CD8-positive, alpha-beta T cell (primary cell): ENCODE measurements at regions of chr7 and their contacts with region 1.

Region 1: GRCh38 chr7:151351027-151351426 is 9.4 kb downstream of the NUB1 start:
- DNase-seq: peak in 4 of 9 experiments; percentile 29 to 59 (median 46)
- ATAC-seq: no peak
- H3K4me3 ChIP-seq: no peak overlapping the region
- H3K4me3 Mint-ChIP-seq: peak overlapping the region; percentile 22
- H3K27ac ChIP-seq: peak overlapping the region; percentile 45 to 98
- H3K27ac Mint-ChIP-seq: peak overlapping the region; percentile 89
- H3K4me1 ChIP-seq: peaks cover 39% of the 10 kb centered on the region
- H3K4me1 Mint-ChIP-seq: peaks cover 57% of the 10 kb centered on the region
- H3K27me3 ChIP-seq: no peaks in the 10 kb centered on the region
- H3K27me3 Mint-ChIP-seq: no peaks in the 10 kb centered on the region
- CTCF ChIP-seq: no peak

Region 2: GRCh38 chr7:151232091-151232916 is 118.7 kb before region 1 on chr7 and contains the start of gene CHPF2:
- CTCF ChIA-PET with region 1: interaction called, 3 read pairs
- POLR2A ChIA-PET with region 1: no interaction called
- intact Hi-C with region 1: loop called in 1 of 2 experiments (anchors 1 kb)
- DNase-seq: peak; percentile 71 to 94 (median 92)
- ATAC-seq: peak; percentile 74
- H3K4me3 ChIP-seq: peak within 1 kb of the TSS; percentile 76 to 96
- H3K4me3 Mint-ChIP-seq: peak within 1 kb of the TSS; percentile 100
- H3K27ac ChIP-seq: peak within 1 kb of the TSS; percentile 54 to 59
- H3K27ac Mint-ChIP-seq: peak within 1 kb of the TSS; percentile 98
- H3K4me1 ChIP-seq: peaks cover 22% of the 10 kb centered on the region
- H3K4me1 Mint-ChIP-seq: peaks cover 35% of the 10 kb centered on the region
- H3K27me3 ChIP-seq: no peaks in the 10 kb centered on the region
- H3K27me3 Mint-ChIP-seq: no peaks in the 10 kb centered on the region
- CTCF ChIP-seq: no peak
- total RNA-seq, gene CHPF2: 24.7 to 24.9 TPM

Region 3: GRCh38 chr7:151315038-151315655 is 35.9 kb before region 1 on chr7:
- CTCF ChIA-PET with region 1: interaction called, 192 read pairs
- POLR2A ChIA-PET with region 1: interaction called, 10 read pairs
- intact Hi-C with region 1: loop called (anchors 1 kb)
- DNase-seq: peak; percentile 63 to 89 (median 82)
- ATAC-seq: peak; percentile 95
- H3K4me3 ChIP-seq: no peak overlapping the region
- H3K4me3 Mint-ChIP-seq: no peak overlapping the region
- H3K27ac ChIP-seq: no peak overlapping the region
- H3K27ac Mint-ChIP-seq: no peak overlapping the region
- H3K4me1 ChIP-seq: peaks cover 4% of the 10 kb centered on the region
- H3K4me1 Mint-ChIP-seq: peaks cover 6% of the 10 kb centered on the region
- H3K27me3 ChIP-seq: peaks cover 0 to 4% of the 10 kb centered on the region in 2 experiments
- H3K27me3 Mint-ChIP-seq: no peaks in the 10 kb centered on the region
- CTCF ChIP-seq: peak; percentile 88

Region 4: GRCh38 chr7:151368136-151368571 is 17.1 kb after region 1 on chr7:
- CTCF ChIA-PET with region 1: interaction called, 60 read pairs
- POLR2A ChIA-PET with region 1: interaction called, 10 read pairs
- intact Hi-C with region 1: loop called in 1 of 2 experiments (anchors 1 kb)
- DNase-seq: peak; percentile 56 to 86 (median 77)
- ATAC-seq: peak; percentile 97
- H3K4me3 ChIP-seq: no peak overlapping the region
- H3K4me3 Mint-ChIP-seq: no peak overlapping the region
- H3K27ac ChIP-seq: no peak overlapping the region
- H3K27ac Mint-ChIP-seq: peak overlapping the region; percentile 64
- H3K4me1 ChIP-seq: peaks cover 9% of the 10 kb centered on the region
- H3K4me1 Mint-ChIP-seq: peaks cover 18% of the 10 kb centered on the region
- H3K27me3 ChIP-seq: no peaks in the 10 kb centered on the region
- H3K27me3 Mint-ChIP-seq: no peaks in the 10 kb centered on the region
- CTCF ChIP-seq: peak; percentile 96

Region 5: DNA sequence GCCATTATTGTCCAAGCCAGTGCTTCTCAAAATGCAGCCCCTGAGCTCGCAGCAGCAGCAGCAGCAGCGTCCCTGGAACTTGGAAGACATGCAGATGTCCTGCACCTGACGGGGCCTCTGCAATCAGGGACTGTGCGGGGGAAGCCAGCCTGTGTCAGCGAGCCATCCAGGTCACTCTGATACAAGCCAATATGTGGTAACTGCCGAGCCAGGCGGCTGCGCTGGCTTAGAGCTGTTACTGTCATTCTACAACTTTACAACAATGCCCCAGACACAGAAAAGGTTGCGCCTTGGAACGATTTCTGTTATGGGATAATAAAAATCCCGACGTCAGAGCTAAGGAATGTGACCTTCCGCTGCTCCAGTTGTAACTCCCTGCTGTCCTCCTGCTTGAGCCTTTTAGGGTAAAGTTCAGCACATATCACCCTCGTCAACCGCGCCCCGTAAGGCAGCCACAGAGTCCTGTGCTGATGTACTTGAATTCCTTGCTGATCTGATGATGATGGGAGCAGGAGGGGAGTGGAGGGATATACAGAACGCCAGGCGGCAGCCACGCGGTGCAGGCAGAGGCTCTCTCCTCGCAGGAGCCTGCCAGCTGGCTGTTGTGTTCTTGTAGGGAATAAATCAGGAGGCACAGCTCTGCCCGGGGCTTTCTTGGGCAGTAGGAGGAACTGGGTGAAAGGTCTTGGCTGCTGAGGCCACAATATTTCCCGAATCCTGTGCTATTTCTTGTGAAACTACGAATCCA is 108.9 kb after region 1 on chr7:
- CTCF ChIA-PET with region 1: no interaction called
- POLR2A ChIA-PET with region 1: no interaction called
- intact Hi-C with region 1: no loop called
- DNase-seq: no peak
- ATAC-seq: no peak
- H3K4me3 ChIP-seq: no peak overlapping the region
- H3K4me3 Mint-ChIP-seq: no peak overlapping the region
- H3K27ac ChIP-seq: no peak overlapping the region
- H3K27ac Mint-ChIP-seq: no peak overlapping the region
- H3K4me1 ChIP-seq: no peaks in the 10 kb centered on the region
- H3K4me1 Mint-ChIP-seq: peaks cover 5% of the 10 kb centered on the region
- H3K27me3 ChIP-seq: no peaks in the 10 kb centered on the region
- H3K27me3 Mint-ChIP-seq: peaks cover 7% of the 10 kb centered on the region
- CTCF ChIP-seq: no peak

Region 6: GRCh38 chr7:151519765-151520418 is 168.9 kb after region 1 on chr7 and contains the start of gene RHEB:
- CTCF ChIA-PET with region 1: no interaction called
- POLR2A ChIA-PET with region 1: no interaction called
- intact Hi-C with region 1: loop called in 1 of 2 experiments (anchors 5 kb)
- DNase-seq: peak; percentile 94 to 99 (median 98)
- ATAC-seq: peak; percentile 82
- H3K4me3 ChIP-seq: peak within 1 kb of the TSS; percentile 65 to 73
- H3K4me3 Mint-ChIP-seq: peak within 1 kb of the TSS; percentile 84
- H3K27ac ChIP-seq: peak within 1 kb of the TSS; percentile 85 to 86
- H3K27ac Mint-ChIP-seq: peak within 1 kb of the TSS; percentile 94
- H3K4me1 ChIP-seq: peaks cover 34% of the 10 kb centered on the region
- H3K4me1 Mint-ChIP-seq: peaks cover 41% of the 10 kb centered on the region
- H3K27me3 ChIP-seq: no peaks in the 10 kb centered on the region
- H3K27me3 Mint-ChIP-seq: no peaks in the 10 kb centered on the region
- CTCF ChIP-seq: no peak
- total RNA-seq, gene RHEB: 57.2 to 61.0 TPM